Activated CD8-positive, alpha-beta T cell treated with anti-CD3 and anti-CD28 coated beads, Interleukin-2, amount 10 ng/mL, durations not matched to agents 7 days and 5 days (primary cell): ENCODE measurements at regions of chr6 and their contacts with region 1.

Region 1: GRCh38 chr6:6676910-6677441 is 88.5 kb downstream of the LY86 start:
- DNase-seq: peak; percentile 89
- ATAC-seq: peak; percentile 86
- H3K4me3 Mint-ChIP-seq: no peak overlapping the region
- H3K27ac Mint-ChIP-seq: peak overlapping the region; percentile 67
- H3K4me1 Mint-ChIP-seq: peaks cover 30% of the 10 kb centered on the region
- H3K27me3 Mint-ChIP-seq: no peaks in the 10 kb centered on the region

Region 2: DNA sequence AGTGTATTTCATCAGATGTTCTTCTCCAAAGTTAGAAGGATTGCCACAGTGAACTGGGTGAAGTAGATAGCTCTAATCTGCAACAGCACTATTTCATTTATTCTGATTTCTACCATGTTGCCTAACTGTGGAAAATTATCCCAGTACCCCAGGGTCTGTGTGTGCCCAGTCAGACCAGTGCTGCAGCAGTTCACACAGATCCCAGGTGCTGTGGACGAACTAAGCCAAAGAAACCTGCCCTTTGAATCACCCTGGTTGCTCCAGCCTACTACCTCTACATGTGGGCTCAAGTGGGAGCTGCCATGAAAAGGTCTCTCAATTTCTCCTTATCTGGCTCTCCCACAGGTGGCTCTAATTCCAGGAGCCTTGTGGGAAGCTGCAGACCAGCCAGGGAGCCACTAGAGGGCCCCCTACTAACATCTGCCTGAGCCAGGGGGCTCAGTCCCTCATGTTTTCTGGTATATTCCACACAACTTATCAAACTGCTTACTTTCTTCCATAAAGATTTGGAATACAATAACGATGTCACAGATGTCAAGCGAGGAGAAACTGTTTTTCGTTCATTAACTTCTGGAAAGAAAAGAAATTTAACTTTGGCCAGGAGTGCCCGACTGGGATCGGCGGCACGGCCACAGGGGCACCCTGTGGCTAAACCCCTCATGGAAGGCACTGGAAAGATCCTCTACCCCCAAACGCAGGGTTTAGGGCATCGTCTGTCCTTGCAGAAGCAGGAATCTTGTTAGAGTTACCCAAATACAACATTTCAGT is 120.1 kb before region 1 on chr6:
- CTCF ChIA-PET with region 1: interaction called, 26 read pairs
- POLR2A ChIA-PET with region 1: no interaction called
- DNase-seq: peak; percentile 63
- ATAC-seq: peak; percentile 57
- H3K4me3 Mint-ChIP-seq: no peak overlapping the region
- H3K27ac Mint-ChIP-seq: no peak overlapping the region
- H3K4me1 Mint-ChIP-seq: peaks cover 42% of the 10 kb centered on the region
- H3K27me3 Mint-ChIP-seq: peaks cover 29% of the 10 kb centered on the region

Region 3: GRCh38 chr6:6661684-6662083 is 15.3 kb before region 1 on chr6:
- CTCF ChIA-PET with region 1: interaction called, 32 read pairs
- POLR2A ChIA-PET with region 1: no interaction called
- DNase-seq: no peak
- ATAC-seq: no peak
- H3K4me3 Mint-ChIP-seq: no peak overlapping the region
- H3K27ac Mint-ChIP-seq: no peak overlapping the region
- H3K4me1 Mint-ChIP-seq: peaks cover 69% of the 10 kb centered on the region
- H3K27me3 Mint-ChIP-seq: no peaks in the 10 kb centered on the region

Region 4: DNA sequence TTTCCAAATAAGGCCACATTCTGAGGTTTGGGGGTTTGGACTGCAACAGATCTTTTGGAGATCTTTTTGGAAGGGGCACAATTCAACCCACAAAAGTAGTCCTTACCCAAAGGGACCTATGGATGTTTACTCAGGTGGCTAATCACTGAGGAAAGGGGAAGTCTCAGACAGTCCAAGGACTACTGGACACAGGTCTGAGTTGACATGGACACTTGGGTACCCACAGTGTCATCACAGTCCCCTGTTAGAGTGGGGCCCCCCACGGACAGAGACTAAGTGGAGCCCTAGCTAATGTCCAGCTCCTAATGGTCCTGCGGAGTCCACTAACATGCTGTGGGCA is 13.1 kb after region 1 on chr6:
- CTCF ChIA-PET with region 1: interaction called, 15 read pairs
- POLR2A ChIA-PET with region 1: no interaction called
- DNase-seq: no peak
- ATAC-seq: no peak
- H3K4me3 Mint-ChIP-seq: no peak overlapping the region
- H3K27ac Mint-ChIP-seq: no peak overlapping the region
- H3K4me1 Mint-ChIP-seq: peaks cover 41% of the 10 kb centered on the region
- H3K27me3 Mint-ChIP-seq: peaks cover 4% of the 10 kb centered on the region

Region 5: DNA sequence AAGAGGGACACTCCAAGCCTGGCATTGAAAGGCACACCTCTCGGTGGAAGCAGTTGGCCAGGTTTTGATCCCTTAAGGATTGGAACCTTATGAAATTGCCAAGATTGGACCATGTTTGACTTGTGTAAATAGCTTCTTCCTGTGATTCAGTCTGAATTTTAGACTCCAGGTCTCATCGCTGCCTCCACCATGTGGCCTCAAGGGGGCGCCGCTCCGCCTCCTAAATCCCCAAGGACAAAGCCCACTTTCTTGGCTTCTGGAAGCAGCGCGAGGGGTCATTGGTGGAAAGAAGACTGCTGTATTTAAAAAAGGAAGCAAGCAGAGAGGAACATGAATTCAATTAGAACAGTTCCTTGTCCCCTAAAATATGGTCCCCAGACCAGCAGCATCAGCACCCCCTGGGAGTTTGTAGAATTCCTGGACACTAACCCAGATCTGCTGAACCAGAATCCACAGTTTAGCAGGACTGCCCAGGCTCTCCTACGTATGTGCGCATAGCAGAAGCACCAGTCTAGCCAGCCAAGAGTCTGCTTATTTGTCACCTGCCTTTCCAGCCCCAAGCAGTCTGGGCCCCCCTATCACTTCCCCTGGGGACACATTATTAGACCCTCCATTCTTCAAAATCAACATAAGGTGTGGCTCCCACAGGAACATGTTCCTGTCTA is 20.0 kb after region 1 on chr6:
- CTCF ChIA-PET with region 1: interaction called, 16 read pairs
- POLR2A ChIA-PET with region 1: no interaction called
- DNase-seq: peak; percentile 65
- ATAC-seq: peak; percentile 35
- H3K4me3 Mint-ChIP-seq: no peak overlapping the region
- H3K27ac Mint-ChIP-seq: peak overlapping the region; percentile 77
- H3K4me1 Mint-ChIP-seq: peaks cover 38% of the 10 kb centered on the region
- H3K27me3 Mint-ChIP-seq: peaks cover 14% of the 10 kb centered on the region

Region 6: GRCh38 chr6:6942091-6942490 is 265.1 kb after region 1 on chr6:
- CTCF ChIA-PET with region 1: no interaction called
- POLR2A ChIA-PET with region 1: no interaction called
- DNase-seq: no peak
- ATAC-seq: no peak
- H3K4me3 Mint-ChIP-seq: no peak overlapping the region
- H3K27ac Mint-ChIP-seq: no peak overlapping the region
- H3K4me1 Mint-ChIP-seq: peaks cover 15% of the 10 kb centered on the region
- H3K27me3 Mint-ChIP-seq: no peaks in the 10 kb centered on the region

Region 7: DNA sequence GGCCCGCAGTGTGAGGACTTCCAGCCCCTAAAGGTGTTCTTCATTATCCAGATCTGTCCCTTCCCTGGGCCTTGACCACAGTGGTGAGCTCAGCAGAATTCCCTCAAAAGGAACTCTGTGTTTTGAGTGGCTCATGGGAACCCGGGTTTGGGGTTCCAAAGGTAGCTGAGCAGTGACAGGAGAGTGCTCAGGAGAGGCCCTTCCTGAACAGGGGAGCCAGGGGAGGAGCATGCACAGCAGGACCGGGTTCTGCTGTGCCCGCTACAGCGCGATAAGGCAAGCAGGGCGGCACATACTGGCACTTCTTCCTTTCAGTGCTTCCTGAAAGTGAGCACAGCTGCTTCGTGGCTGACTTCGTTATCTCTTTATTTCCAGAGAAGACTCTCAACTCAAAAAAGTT is 547.8 kb after region 1 on chr6:
- CTCF ChIA-PET with region 1: no interaction called
- POLR2A ChIA-PET with region 1: no interaction called
- DNase-seq: no peak
- ATAC-seq: no peak
- H3K4me3 Mint-ChIP-seq: no peak overlapping the region
- H3K27ac Mint-ChIP-seq: no peak overlapping the region
- H3K4me1 Mint-ChIP-seq: peaks cover 2% of the 10 kb centered on the region
- H3K27me3 Mint-ChIP-seq: no peaks in the 10 kb centered on the region

Region 8: DNA sequence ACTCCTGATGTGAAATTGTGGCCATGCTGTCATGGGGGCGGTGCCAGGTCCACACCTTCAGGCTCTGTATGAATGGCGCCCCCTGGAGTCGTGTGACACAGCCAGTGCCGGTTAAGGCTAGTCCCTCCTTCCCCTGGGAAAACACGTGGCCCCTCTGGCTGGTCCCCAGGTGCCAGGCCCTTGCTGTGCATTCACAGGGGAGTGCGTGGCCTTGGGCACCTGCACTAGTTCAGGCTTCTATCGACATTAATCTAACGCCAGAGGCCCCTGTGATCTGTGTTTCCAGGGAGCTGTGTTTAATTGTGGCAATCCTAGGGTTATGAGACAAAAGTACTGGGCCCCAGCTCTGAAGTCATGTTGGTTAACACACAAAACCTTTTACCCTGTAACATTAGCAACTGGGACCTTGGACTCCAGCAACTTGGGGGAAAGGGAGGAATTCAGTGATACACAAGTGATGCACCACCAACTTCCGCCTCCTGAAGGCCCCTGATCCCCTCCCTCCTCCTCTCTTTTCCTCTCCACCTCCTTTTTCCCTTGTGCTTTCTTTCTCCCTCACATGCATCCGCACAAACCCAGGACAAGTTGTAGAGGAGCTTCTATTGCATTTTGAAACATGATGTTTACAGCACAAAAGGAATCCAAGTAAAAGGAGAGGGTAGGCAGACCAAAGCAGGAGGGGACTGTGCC is 562.1 kb after region 1 on chr6:
- CTCF ChIA-PET with region 1: interaction called, 25 read pairs
- POLR2A ChIA-PET with region 1: no interaction called
- DNase-seq: peak; percentile 82
- ATAC-seq: peak; percentile 87
- H3K4me3 Mint-ChIP-seq: no peak overlapping the region
- H3K27ac Mint-ChIP-seq: no peak overlapping the region
- H3K4me1 Mint-ChIP-seq: peaks cover 24% of the 10 kb centered on the region
- H3K27me3 Mint-ChIP-seq: no peaks in the 10 kb centered on the region